ENCODE measurements at regions of chrX and their contacts with region 1.

Region 1: DNA sequence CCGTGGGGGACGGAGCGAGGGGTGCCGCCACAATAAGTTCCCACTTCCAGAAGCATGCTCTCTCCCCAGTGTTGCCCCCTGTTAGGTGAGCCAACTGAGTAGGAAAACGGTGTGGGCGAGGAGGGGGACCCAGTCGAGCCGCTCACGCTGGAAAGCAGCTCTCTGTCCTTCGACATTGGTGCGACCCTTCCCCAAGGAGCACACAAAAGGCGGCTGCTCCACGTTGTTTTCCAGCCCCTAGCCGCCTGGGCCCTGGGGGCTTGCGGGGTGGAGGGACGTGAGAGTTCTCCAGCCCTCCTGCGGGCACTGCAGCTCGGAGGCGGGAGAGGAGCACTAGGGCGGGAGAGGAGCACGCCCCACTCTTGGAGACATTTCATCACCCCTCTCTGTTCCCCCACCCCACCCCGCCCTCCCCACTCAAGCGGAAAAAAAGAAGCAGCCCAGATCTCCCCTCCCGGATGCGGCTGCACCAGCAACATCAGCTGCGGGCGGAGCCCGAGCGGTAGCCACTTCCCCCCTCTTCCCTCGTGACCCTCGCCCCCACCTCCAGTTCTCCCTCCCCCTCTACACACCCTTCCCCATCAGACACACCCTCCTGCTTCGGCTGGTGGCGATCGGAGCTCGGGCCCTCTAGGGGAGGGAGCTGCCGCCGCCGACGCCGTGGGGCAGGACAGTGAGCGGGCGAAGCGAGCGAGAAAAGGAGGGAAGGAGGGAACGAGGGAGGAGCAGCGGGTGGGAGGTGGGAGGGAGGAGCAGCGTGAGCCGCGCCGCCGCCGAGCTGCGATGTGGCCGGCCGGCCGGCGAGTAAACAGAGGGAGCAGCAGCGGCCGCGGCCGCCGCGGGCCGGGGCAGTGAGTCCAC is at the start of gene DOCK11:
- DNase-seq: peak; percentile 77
- H3K4me3 Mint-ChIP-seq: peak within 1 kb of the TSS; percentile 97
- H3K27ac Mint-ChIP-seq: peak within 1 kb of the TSS; percentile 97
- H3K4me1 Mint-ChIP-seq: peaks cover 26% of the 10 kb centered on the region
- H3K27me3 Mint-ChIP-seq: no peaks in the 10 kb centered on the region
- total RNA-seq, gene DOCK11: 29.9 and 31.8 TPM in 2 replicates

Region 2: GRCh38 chrX:118143578-118143977 is 351.7 kb before region 1 on chrX:
- intact Hi-C with region 1: no loop called
- DNase-seq: no peak
- H3K4me3 Mint-ChIP-seq: no peak overlapping the region
- H3K27ac Mint-ChIP-seq: no peak overlapping the region
- H3K4me1 Mint-ChIP-seq: no peaks in the 10 kb centered on the region
- H3K27me3 Mint-ChIP-seq: no peaks in the 10 kb centered on the region

Region 3: DNA sequence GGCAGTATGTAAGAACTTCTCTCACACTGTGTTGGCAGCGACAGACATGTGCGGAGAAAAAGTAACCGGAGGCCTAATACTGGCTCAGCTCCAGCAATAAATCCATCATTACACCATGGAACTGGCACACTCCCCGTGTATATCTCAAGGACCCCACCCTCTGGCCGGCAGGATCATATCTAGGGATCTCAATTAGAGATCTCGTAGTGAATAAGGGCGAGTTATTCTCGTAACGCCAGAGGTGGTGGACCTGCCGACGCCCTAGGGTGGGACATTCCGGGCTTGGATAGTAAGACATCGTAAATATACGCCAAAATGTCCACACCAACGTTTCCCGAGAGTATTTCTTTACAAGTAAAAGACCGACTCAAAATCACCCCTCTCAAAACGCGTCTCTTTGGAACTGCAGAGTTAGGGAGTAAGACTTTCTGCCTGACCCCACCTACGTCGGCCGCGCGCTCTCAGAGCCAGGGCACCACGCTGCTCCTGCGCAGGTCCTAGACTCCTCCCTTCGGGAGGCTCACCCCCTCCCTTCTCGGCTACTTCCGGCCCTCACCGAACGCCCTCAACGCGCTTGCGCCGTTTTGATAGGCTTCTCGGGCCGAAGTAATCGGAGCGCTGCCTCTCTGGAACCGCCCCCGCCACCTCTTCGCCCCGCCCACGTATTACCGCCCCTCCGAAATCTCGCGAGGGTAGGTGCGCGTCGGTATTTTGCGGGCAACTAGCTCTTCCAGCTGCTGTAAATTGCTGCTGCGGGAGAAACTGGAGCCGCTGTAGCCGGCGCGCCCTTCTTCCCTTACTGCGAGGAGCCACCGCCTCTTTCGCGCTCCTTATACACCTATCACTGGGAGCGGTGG is 149.7 kb before region 1 on chrX and contains the start of gene WDR44:
- intact Hi-C with region 1: loop called (anchors 1 kb)
- DNase-seq: peak; percentile 91
- H3K4me3 Mint-ChIP-seq: peak within 1 kb of the TSS; percentile 98
- H3K27ac Mint-ChIP-seq: peak within 1 kb of the TSS; percentile 98
- H3K4me1 Mint-ChIP-seq: peaks cover 27% of the 10 kb centered on the region
- H3K27me3 Mint-ChIP-seq: no peaks in the 10 kb centered on the region
- total RNA-seq, gene WDR44: 10.0 and 12.9 TPM in 2 replicates

Region 4: GRCh38 chrX:118392716-118393115 is 102.6 kb before region 1 on chrX:
- intact Hi-C with region 1: no loop called
- DNase-seq: no peak
- H3K4me3 Mint-ChIP-seq: no peak overlapping the region
- H3K27ac Mint-ChIP-seq: no peak overlapping the region
- H3K4me1 Mint-ChIP-seq: peaks cover 15% of the 10 kb centered on the region
- H3K27me3 Mint-ChIP-seq: no peaks in the 10 kb centered on the region

Region 5: GRCh38 chrX:118528071-118528737 is 32.9 kb after region 1 on chrX:
- intact Hi-C with region 1: loop called (anchors 1 kb)
- DNase-seq: peak; percentile 51
- H3K4me3 Mint-ChIP-seq: peak overlapping the region; percentile 91
- H3K27ac Mint-ChIP-seq: peak overlapping the region; percentile 98
- H3K4me1 Mint-ChIP-seq: peaks cover 51% of the 10 kb centered on the region
- H3K27me3 Mint-ChIP-seq: no peaks in the 10 kb centered on the region

Region 6: DNA sequence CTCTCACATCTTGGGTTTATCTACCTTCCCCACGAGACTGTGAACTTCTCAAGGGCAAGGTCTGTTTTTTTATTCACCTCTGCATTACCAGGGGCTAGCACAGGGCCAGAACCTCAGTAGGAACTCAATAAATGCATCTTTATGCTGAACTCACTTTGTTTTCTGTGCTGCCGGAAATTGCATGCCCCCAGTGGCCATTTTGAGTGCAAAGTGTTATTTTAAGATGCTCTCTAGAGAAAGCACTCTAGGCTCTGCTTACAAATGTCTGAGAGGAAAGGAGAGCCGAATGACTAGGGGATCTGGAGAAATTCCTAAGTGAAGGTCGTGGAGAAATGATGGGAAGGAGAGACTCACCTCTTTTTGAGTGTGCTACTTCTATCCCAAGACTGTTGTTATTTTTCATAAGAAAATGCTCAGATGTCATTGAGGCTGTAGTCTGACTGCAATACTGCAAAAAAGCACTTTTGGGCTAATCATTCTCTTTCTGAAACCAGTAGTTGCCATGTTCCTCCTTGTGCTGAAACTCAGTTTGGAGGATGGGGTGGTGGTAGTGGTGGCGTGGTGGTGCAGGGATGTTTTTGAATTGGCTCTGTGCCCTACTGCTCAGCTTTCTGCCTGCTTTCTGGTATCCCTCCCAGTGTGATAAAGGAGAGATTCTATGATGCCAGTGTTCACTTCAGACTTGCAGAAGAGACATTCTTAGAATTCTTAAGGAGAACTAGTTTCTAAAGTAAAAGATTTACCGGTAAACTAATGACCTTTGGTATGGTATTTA is 41.6 kb after region 1 on chrX:
- intact Hi-C with region 1: loop called (anchors 2 kb)
- DNase-seq: peak; percentile 23
- H3K4me3 Mint-ChIP-seq: peak overlapping the region; percentile 59
- H3K27ac Mint-ChIP-seq: peak overlapping the region; percentile 98
- H3K4me1 Mint-ChIP-seq: peaks cover 52% of the 10 kb centered on the region
- H3K27me3 Mint-ChIP-seq: no peaks in the 10 kb centered on the region

Region 7: DNA sequence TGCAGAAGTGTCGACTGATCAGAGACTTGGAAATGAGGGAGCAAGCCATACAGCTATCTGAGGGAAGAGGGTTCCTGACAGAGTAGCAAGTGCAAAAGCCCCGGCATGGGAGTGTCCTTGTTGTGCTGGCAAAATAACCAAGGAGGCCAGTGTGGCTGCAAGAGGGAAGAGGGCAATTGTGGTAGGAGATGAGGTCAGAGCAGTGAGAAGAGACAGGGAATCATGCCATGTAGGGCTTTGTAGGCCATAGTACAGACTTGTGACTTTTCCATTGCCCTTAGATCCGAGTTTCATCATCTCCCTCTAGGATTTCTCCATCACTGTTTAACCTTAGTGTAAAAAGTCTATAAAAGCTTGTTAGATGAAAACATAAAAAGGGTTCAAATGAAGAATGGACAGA is 76.5 kb after region 1 on chrX:
- intact Hi-C with region 1: loop called (anchors 1 kb)
- DNase-seq: no peak
- H3K4me3 Mint-ChIP-seq: no peak overlapping the region
- H3K27ac Mint-ChIP-seq: no peak overlapping the region
- H3K4me1 Mint-ChIP-seq: peaks cover 15% of the 10 kb centered on the region
- H3K27me3 Mint-ChIP-seq: no peaks in the 10 kb centered on the region

Region 8: GRCh38 chrX:118603981-118604380 is 108.7 kb after region 1 on chrX:
- intact Hi-C with region 1: loop called (anchors 5 kb)
- DNase-seq: no peak
- H3K4me3 Mint-ChIP-seq: no peak overlapping the region
- H3K27ac Mint-ChIP-seq: no peak overlapping the region
- H3K4me1 Mint-ChIP-seq: peaks cover 3% of the 10 kb centered on the region
- H3K27me3 Mint-ChIP-seq: no peaks in the 10 kb centered on the region

Region 9: GRCh38 chrX:119155416-119156035 is 660.2 kb after region 1 on chrX:
- intact Hi-C with region 1: no loop called
- DNase-seq: no peak
- H3K4me3 Mint-ChIP-seq: no peak overlapping the region
- H3K27ac Mint-ChIP-seq: no peak overlapping the region
- H3K4me1 Mint-ChIP-seq: no peaks in the 10 kb centered on the region
- H3K27me3 Mint-ChIP-seq: no peaks in the 10 kb centered on the region

Measured in activated T-helper 2 cell treated with anti-CD3 and anti-CD28 coated beads, Interferon-gamma antibody, Interleukin-2, Interleukin-4, amounts not matched to agents 10 μg/mL and 5 μg/mL and 100 μg/mL, durations not matched to agents 14 hours and 24 hours and 36 hours (primary cell).